Stomach (tissue), 19 donors: ENCODE measurements at regions of chr10 and their contacts with region 1.

Region 1: GRCh38 chr10:112314822-112315474 is 31.7 kb downstream of the TECTB start:
- DNase-seq: peak; percentile 89 to 92
- H3K4me3 ChIP-seq: no peak overlapping the region
- H3K27ac ChIP-seq: no peak overlapping the region
- H3K4me1 ChIP-seq: peaks cover 0 to 6% (median 0%) of the 10 kb centered on the region in 4 donors
- H3K27me3 ChIP-seq: peaks cover 0 to 7% (median 0%) of the 10 kb centered on the region in 3 donors
- CTCF ChIP-seq: peak in 5 of 7 experiments; percentile 43 to 90 (median 83)
- EP300 ChIP-seq: no peak
- POLR2A ChIP-seq: no peak

Region 2: GRCh38 chr10:111875725-111876124 is 439.2 kb before region 1 on chr10:
- intact Hi-C with region 1: no loop called
- DNase-seq: no peak
- H3K4me3 ChIP-seq: no peak overlapping the region
- H3K27ac ChIP-seq: no peak overlapping the region
- H3K4me1 ChIP-seq: no peaks in the 10 kb centered on the region
- H3K27me3 ChIP-seq: no peaks in the 10 kb centered on the region
- CTCF ChIP-seq: no peak
- EP300 ChIP-seq: no peak
- POLR2A ChIP-seq: no peak

Region 3: DNA sequence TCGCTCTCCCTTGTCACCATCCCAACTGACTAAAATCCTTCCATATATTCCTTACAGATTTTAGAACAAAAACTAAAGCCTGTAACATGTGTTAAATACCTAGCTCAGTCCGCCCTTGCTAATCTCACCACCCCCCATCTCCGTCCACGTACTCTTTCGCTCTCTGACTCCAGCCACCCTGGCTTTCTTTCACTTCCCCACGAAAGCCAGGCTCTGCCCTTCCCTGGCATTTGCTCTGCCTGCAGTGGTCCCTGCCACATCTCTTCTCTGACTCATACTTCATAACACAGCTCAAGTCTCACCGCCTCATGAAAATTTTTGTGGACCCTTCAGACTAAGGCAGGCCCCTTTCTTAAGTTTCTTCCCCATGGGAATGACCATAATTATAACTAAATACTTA is 119.7 kb before region 1 on chr10:
- intact Hi-C with region 1: loop called (anchors 10 kb)
- DNase-seq: no peak
- H3K4me3 ChIP-seq: no peak overlapping the region
- H3K27ac ChIP-seq: no peak overlapping the region
- H3K4me1 ChIP-seq: peaks cover 0 to 6% (median 0%) of the 10 kb centered on the region in 4 donors
- H3K27me3 ChIP-seq: no peaks in the 10 kb centered on the region
- CTCF ChIP-seq: no peak
- EP300 ChIP-seq: no peak
- POLR2A ChIP-seq: no peak

Region 4: DNA sequence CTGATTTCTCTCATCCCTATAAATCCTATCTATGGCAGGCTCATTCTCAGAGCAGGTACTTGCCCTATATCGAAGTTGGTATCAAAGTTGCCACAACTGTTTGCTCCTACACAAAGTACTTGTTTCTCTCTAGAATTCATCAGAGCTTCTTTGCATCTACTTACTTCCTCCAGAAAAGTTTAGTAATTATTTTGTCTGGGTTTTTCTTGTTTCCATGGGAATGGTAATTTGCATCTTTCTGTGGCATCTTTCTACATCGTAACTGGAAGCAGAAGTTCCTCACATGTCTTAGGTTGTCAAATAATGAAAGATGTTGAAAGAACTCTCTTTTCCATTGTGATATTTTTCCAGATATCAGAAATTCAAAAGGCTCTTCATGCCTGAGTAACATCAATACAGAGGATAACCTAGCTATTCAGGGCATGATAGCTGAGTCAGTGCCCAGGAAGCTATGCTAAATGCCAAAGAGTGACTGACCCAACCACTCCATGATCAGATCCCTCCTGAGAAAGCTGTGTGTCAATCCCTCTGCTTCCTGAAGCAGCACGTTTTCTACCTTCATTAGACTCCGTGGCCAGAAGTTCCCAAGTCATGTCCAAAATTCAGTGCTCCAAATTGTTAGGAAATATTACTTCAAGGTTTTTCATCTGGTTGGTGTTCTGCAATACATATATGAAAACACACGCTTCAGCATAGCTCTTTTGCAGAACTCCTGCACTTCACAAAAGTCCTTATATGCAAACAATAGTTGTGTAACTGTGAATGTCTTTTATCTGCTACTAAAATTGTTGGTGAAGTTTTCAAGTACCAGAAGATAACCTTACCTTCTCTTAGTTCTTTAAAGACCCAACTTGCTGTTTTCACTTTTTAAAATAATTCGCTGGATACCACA is 348.5 kb after region 1 on chr10:
- intact Hi-C with region 1: no loop called
- DNase-seq: no peak
- H3K4me3 ChIP-seq: no peak overlapping the region
- H3K27ac ChIP-seq: no peak overlapping the region
- H3K4me1 ChIP-seq: peaks cover 0 to 8% (median 3%) of the 10 kb centered on the region in 4 donors
- H3K27me3 ChIP-seq: no peaks in the 10 kb centered on the region
- CTCF ChIP-seq: no peak
- EP300 ChIP-seq: no peak
- POLR2A ChIP-seq: no peak